ENCODE measurements at regions of chr5 and their contacts with region 1.

Region 1: DNA sequence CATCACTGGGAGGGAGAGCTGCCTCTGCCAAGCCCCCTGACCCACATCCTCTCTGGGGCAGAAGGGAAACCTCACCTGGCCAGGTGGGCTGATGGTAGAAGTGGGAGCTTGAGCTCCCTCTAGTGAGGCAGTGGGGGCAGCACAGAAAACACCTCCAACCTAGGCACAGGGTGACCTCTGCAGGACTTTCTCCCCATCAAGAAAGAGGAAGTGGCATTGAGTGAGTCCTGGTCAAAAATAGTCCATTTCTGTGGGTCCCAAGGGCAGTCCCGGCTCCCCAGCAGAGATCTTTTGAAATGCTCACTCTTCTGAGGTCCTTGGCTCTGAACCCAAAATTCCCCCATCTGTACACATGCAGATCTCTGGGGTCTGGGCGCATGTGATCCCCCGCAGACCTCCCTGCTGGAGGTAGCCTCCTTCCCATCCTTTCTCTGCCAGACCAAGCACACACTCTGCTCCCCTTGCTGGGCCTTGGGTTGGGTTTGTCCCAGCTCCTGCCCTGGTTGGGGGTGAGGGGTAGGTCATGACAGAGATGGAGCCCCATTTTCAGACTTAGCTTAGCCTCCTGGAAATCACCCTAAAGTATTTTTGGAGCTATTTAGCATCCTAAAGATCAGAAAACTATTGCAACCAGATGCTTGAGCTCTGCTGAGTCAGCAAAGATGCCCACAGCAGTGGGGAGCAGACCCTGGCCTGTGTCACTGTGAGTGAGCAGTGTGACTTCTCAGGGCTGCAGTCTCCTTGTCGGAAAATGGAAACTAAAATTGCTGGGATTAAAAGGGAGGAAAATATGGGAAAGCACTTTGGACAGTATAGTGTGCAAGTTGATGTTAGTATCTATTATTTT is 41.6 kb upstream of the LCP2 start:
- DNase-seq: peak; percentile 64 to 72 (median 70)
- H3K4me3 ChIP-seq: no peak overlapping the region
- H3K4me3 Mint-ChIP-seq: no peak overlapping the region
- H3K27ac ChIP-seq: peak overlapping the region; percentile 8
- H3K27ac Mint-ChIP-seq: peak overlapping the region in 5 of 7 donors; percentile 45 to 89 (median 56)
- H3K4me1 ChIP-seq: peaks cover 51% of the 10 kb centered on the region
- H3K4me1 Mint-ChIP-seq: peaks cover 0 to 39% (median 27%) of the 10 kb centered on the region in 4 donors
- H3K27me3 ChIP-seq: no peaks in the 10 kb centered on the region
- H3K27me3 Mint-ChIP-seq: no peaks in the 10 kb centered on the region

Region 2: GRCh38 chr5:170100066-170100943 is 238.9 kb before region 1 on chr5:
- CTCF ChIA-PET with region 1: interaction called, 12 read pairs
- POLR2A ChIA-PET with region 1: no interaction called
- intact Hi-C with region 1: loop called (anchors 1 kb)
- DNase-seq: peak; percentile 51 to 66 (median 56)
- H3K4me3 ChIP-seq: no peak overlapping the region
- H3K4me3 Mint-ChIP-seq: no peak overlapping the region
- H3K27ac ChIP-seq: no peak overlapping the region
- H3K27ac Mint-ChIP-seq: peak overlapping the region in 2 of 7 donors; percentile 44 to 62
- H3K4me1 ChIP-seq: no peaks in the 10 kb centered on the region
- H3K4me1 Mint-ChIP-seq: peaks cover 0 to 1% (median 0%) of the 10 kb centered on the region in 4 donors
- H3K27me3 ChIP-seq: no peaks in the 10 kb centered on the region
- H3K27me3 Mint-ChIP-seq: peaks cover 1 to 7% of the 10 kb centered on the region in 2 donors

Region 3: GRCh38 chr5:170262061-170263045 is 76.8 kb before region 1 on chr5:
- CTCF ChIA-PET with region 1: interaction called, 200 read pairs
- POLR2A ChIA-PET with region 1: interaction called, 148 read pairs
- intact Hi-C with region 1: no loop called
- DNase-seq: peak; percentile 77 to 85 (median 80)
- H3K4me3 ChIP-seq: peak overlapping the region; percentile 4 to 28
- H3K4me3 Mint-ChIP-seq: peak overlapping the region; percentile 59 to 82 (median 72)
- H3K27ac ChIP-seq: peak overlapping the region; percentile 67
- H3K27ac Mint-ChIP-seq: peak overlapping the region; percentile 82 to 98 (median 95)
- H3K4me1 ChIP-seq: peaks cover 80% of the 10 kb centered on the region
- H3K4me1 Mint-ChIP-seq: peaks cover 51 to 89% (median 74%) of the 10 kb centered on the region in 4 donors
- H3K27me3 ChIP-seq: no peaks in the 10 kb centered on the region
- H3K27me3 Mint-ChIP-seq: no peaks in the 10 kb centered on the region

Region 4: DNA sequence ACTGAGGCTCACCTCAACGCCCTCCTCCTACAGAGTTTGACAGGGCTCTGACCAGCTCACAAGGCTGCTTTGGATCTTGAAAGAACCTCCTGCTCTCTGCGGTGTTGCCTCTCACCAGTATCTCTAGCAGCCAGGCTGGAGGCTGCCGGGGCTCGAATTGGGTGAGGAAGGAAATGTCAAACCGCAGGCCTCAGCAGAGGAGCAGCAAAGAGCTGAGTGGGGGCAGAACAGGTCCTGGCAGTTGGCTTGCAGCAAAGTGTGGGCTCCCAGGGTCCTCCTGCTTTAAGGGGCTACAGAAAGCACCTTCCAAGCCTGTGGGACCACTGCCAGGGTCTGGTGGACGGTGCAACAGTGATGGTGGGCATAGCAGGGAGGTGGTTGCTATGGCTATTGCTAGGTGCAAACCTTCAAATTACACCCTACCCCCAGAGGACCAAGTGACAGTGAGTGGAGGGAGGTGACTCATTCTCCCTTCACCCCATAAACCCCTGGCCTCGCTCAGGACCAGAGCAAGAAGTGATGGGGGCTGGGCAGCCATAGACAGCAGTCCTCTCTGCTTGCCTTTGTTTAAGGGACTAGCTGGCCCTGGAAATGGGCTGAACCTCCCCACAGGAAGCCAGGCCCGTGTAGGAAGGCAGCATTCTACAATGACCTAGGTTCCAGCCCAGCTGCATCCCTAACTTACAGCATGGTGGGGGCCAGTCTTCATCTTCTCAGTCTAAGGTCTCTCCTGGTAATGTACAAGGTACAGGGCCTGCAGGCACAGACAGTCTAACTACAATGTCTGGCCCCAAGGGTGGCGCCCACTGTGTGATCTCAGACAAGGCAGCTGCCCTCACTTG is 60.3 kb before region 1 on chr5:
- CTCF ChIA-PET with region 1: interaction called, 195 read pairs
- POLR2A ChIA-PET with region 1: interaction called, 664 read pairs
- intact Hi-C with region 1: loop called (anchors 1 kb)
- DNase-seq: peak; percentile 90 to 96 (median 91)
- H3K4me3 ChIP-seq: peak overlapping the region in 1 of 2 donors; percentile 15
- H3K4me3 Mint-ChIP-seq: peak overlapping the region; percentile 75 to 92 (median 85)
- H3K27ac ChIP-seq: peak overlapping the region; percentile 68
- H3K27ac Mint-ChIP-seq: peak overlapping the region; percentile 91 to 100 (median 96)
- H3K4me1 ChIP-seq: peaks cover 95% of the 10 kb centered on the region
- H3K4me1 Mint-ChIP-seq: peaks cover 83 to 100% (median 93%) of the 10 kb centered on the region in 4 donors
- H3K27me3 ChIP-seq: no peaks in the 10 kb centered on the region
- H3K27me3 Mint-ChIP-seq: no peaks in the 10 kb centered on the region

Region 5: GRCh38 chr5:170293273-170293672 is 45.9 kb before region 1 on chr5:
- CTCF ChIA-PET with region 1: interaction called, 258 read pairs
- POLR2A ChIA-PET with region 1: interaction called, 664 read pairs
- intact Hi-C with region 1: no loop called
- DNase-seq: peak in 4 of 5 donors; percentile 47 to 77 (median 50)
- H3K4me3 ChIP-seq: peak overlapping the region; percentile 33 to 97
- H3K4me3 Mint-ChIP-seq: peak overlapping the region; percentile 95 to 99 (median 98)
- H3K27ac ChIP-seq: peak overlapping the region; percentile 90
- H3K27ac Mint-ChIP-seq: peak overlapping the region; percentile 87 to 100 (median 96)
- H3K4me1 ChIP-seq: peaks cover 76% of the 10 kb centered on the region
- H3K4me1 Mint-ChIP-seq: peaks cover 59 to 100% (median 67%) of the 10 kb centered on the region in 4 donors
- H3K27me3 ChIP-seq: no peaks in the 10 kb centered on the region
- H3K27me3 Mint-ChIP-seq: no peaks in the 10 kb centered on the region

Region 6: GRCh38 chr5:170312666-170313065 is 26.5 kb before region 1 on chr5:
- CTCF ChIA-PET with region 1: interaction called, 18 read pairs
- POLR2A ChIA-PET with region 1: interaction called, 664 read pairs
- intact Hi-C with region 1: no loop called
- DNase-seq: peak in 2 of 5 donors; percentile 39 to 93
- H3K4me3 ChIP-seq: peak overlapping the region; percentile 3 to 42
- H3K4me3 Mint-ChIP-seq: peak overlapping the region; percentile 63 to 91 (median 76)
- H3K27ac ChIP-seq: peak overlapping the region; percentile 59
- H3K27ac Mint-ChIP-seq: peak overlapping the region; percentile 84 to 97 (median 96)
- H3K4me1 ChIP-seq: peaks cover 48% of the 10 kb centered on the region
- H3K4me1 Mint-ChIP-seq: peaks cover 41 to 69% (median 49%) of the 10 kb centered on the region in 4 donors
- H3K27me3 ChIP-seq: no peaks in the 10 kb centered on the region
- H3K27me3 Mint-ChIP-seq: no peaks in the 10 kb centered on the region

Region 7: DNA sequence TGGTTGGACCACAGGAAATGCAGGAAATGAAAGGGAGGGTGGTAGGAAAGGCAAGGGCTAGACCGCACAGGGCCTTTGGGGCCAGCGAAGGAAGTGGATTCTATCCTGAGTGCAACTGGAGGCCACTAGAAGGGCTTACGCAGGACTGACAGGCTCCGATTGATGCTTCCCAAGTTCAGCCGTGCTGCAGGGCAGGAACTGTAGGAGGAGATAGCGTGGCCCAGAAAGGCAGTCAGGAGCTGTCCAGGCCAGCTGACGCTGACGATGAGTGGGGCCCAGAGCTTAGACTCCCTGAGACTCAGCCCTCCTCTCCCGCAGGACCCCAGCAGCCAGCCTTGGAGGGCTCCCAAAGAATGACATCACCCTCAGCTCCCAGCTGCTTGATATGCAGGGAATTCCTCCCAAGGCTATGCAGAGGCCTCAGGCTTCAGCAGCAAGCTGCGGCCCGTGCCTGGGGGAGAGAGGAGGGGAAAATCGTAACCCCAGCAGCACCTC is 213.5 kb after region 1 on chr5:
- CTCF ChIA-PET with region 1: no interaction called
- POLR2A ChIA-PET with region 1: no interaction called
- intact Hi-C with region 1: no loop called
- DNase-seq: no peak
- H3K4me3 ChIP-seq: no peak overlapping the region
- H3K4me3 Mint-ChIP-seq: no peak overlapping the region
- H3K27ac ChIP-seq: no peak overlapping the region
- H3K27ac Mint-ChIP-seq: no peak overlapping the region
- H3K4me1 ChIP-seq: no peaks in the 10 kb centered on the region
- H3K4me1 Mint-ChIP-seq: no peaks in the 10 kb centered on the region
- H3K27me3 ChIP-seq: no peaks in the 10 kb centered on the region
- H3K27me3 Mint-ChIP-seq: peaks cover 10 to 13% of the 10 kb centered on the region in 2 donors

Measured in CD4-positive, alpha-beta memory T cell (primary cell).